Activated B cell treated with CpG ODN at 0.5 μM for 24 hours (primary cell): ENCODE measurements at regions of chr5 and their contacts with region 1.

Region 1: DNA sequence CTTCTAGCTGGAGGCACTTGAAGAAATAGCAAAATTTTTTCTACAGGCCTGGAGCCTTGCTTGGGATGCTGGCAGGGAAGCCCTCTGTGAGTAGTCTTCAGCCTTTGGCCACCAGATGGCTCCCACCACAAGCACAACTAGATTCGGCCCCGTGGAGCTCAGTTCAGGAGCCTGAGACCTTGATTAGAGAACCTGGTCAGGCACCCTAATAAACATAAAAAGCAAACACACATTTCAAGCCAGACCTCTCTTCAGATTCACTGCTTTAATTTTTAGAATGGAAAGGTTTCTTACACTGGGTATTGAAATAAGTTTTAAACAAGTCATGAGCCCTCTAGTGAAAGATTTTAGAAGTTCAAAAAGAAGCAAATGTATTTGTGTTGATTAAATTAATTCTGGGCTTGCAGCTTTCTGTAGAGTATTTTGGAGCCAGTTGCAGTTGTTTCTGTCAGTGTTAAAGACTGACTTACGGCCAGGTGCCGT is 41.4 kb downstream of the GLRX start:
- DNase-seq: peak; percentile 46
- ATAC-seq: peak; percentile 99
- H3K4me3 Mint-ChIP-seq: peak overlapping the region; percentile 21
- H3K27ac Mint-ChIP-seq: peak overlapping the region; percentile 43
- H3K4me1 Mint-ChIP-seq: peaks cover 7% of the 10 kb centered on the region
- H3K27me3 Mint-ChIP-seq: no peaks in the 10 kb centered on the region
- CTCF ChIP-seq: no peak

Region 2: DNA sequence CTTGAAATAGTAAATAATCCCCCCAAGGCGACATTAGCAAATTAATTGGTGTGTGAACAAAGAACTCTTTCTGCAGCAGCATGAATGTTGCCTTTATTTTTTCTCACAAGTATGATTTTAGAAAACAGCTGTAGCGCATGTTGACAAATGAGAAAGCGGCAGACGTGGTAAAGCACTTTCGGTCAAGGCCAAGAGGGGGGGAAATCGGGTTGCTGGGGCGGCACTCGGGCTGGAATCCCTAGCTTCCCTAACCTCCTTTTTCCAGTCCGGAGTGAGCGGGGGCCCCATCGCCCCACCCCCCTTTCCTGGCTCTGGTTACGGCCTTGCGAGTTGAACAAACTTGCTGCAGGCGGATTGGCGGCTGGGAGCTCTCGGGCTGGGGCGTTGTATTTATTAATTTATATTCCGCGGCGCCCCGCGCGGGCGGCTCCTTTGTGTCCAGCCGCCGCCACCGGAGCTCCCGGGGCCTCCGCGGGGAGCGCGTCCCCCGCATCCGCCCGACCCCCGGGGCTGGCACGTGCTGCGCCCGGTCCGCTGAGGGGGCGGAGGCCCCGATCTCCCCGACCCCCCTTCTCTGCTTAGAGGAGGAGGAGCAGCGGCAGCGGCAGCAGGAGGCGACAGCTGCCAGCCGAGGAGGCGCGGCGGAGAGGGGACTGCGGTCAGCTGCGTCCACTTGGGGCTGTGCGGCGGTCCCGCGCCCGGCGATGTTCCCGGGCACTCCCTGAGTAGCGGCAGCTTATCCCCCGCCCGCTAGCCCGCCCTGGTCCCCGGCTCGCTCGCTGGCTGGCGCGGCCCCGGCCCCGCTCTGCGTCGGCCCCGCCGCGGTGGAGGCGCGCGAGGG is 50.2 kb before region 1 on chr5 and contains the start of gene RHOBTB3:
- CTCF ChIA-PET with region 1: interaction called, 12 read pairs
- POLR2A ChIA-PET with region 1: no interaction called
- intact Hi-C with region 1: no loop called
- DNase-seq: peak; percentile 52
- ATAC-seq: peak; percentile 73
- H3K4me3 Mint-ChIP-seq: peak within 1 kb of the TSS; percentile 87
- H3K27ac Mint-ChIP-seq: peak within 1 kb of the TSS; percentile 61
- H3K4me1 Mint-ChIP-seq: peaks cover 34% of the 10 kb centered on the region
- H3K27me3 Mint-ChIP-seq: peaks cover 18% of the 10 kb centered on the region
- CTCF ChIP-seq: no peak
- total RNA-seq, gene RHOBTB3: 3.3 and 5.0 TPM in 2 replicates

Region 3: DNA sequence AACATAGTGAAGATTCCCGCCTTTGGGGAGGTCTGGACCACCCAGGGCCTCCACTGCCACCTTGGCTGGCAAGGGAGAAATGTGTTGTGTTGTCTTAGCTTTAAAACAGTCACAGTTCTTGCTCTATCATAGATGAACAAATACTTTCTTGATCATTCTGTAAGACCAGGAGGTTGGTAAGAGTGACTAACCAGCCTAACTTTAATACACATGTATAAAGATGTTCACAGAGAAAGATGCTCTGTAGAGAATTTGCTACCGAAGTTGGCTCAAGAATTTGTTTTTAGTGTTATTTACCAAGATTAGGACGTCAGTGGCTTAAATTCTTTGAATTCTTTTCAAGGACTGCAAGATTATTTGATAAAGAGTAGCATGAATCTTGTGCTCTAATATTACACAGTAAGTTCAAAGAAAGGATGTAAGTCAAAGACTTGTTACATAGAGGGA is 13.0 kb after region 1 on chr5:
- CTCF ChIA-PET with region 1: interaction called, 15 read pairs
- POLR2A ChIA-PET with region 1: no interaction called
- intact Hi-C with region 1: no loop called
- DNase-seq: no peak
- ATAC-seq: no peak
- H3K4me3 Mint-ChIP-seq: no peak overlapping the region
- H3K27ac Mint-ChIP-seq: no peak overlapping the region
- H3K4me1 Mint-ChIP-seq: peaks cover 5% of the 10 kb centered on the region
- H3K27me3 Mint-ChIP-seq: no peaks in the 10 kb centered on the region
- CTCF ChIP-seq: no peak

Region 4: GRCh38 chr5:95817440-95817839 is 36.3 kb after region 1 on chr5:
- CTCF ChIA-PET with region 1: interaction called, 32 read pairs
- POLR2A ChIA-PET with region 1: interaction called, 16 read pairs
- intact Hi-C with region 1: loop called (anchors 1 kb)
- DNase-seq: no peak
- ATAC-seq: no peak
- H3K4me3 Mint-ChIP-seq: peak overlapping the region; percentile 78
- H3K27ac Mint-ChIP-seq: peak overlapping the region; percentile 98
- H3K4me1 Mint-ChIP-seq: peaks cover 80% of the 10 kb centered on the region
- H3K27me3 Mint-ChIP-seq: no peaks in the 10 kb centered on the region
- CTCF ChIP-seq: no peak

Region 5: DNA sequence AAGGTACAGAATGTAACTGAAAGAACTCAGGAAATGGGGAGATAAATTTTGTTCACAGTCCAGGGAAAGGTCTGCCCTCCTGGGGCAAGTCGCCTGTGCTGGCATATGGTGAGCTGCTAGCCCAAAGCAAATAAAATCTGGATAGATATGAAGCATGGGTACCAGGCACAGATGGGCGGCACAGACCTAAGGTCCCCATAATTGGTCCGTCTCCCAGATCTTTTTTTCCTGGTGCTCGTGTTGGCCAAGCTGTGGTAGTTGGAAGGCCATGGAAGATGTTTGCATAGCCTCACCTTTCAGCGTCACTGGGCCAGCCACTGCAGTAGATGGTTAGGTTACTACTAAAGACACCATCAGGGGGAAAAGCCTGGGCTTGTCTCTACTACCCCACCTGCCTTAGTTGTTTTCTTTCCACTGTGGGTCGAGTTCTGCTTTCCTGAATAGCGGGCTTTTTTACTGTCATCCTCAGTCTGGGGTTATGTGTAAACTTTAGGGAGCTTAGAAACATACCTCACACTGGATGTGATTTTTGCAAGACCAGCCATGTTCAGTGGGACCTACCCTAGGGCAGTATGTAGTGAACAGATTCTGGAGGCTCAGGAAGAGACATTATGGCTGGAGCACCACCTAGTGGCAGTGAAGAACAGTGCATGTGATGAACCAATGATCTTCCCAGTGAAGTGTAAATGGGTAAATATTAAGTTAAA is 65.6 kb after region 1 on chr5:
- CTCF ChIA-PET with region 1: interaction called, 389 read pairs
- POLR2A ChIA-PET with region 1: interaction called, 16 read pairs
- intact Hi-C with region 1: loop called (anchors 1 kb)
- DNase-seq: peak; percentile 45
- ATAC-seq: peak; percentile 80
- H3K4me3 Mint-ChIP-seq: no peak overlapping the region
- H3K27ac Mint-ChIP-seq: no peak overlapping the region
- H3K4me1 Mint-ChIP-seq: peaks cover 11% of the 10 kb centered on the region
- H3K27me3 Mint-ChIP-seq: no peaks in the 10 kb centered on the region
- CTCF ChIP-seq: peak; percentile 82

Region 6: GRCh38 chr5:96336351-96336985 is 555.3 kb after region 1 on chr5:
- CTCF ChIA-PET with region 1: interaction called, 14 read pairs
- POLR2A ChIA-PET with region 1: no interaction called
- intact Hi-C with region 1: loop called (anchors 1 kb)
- DNase-seq: no peak
- ATAC-seq: peak; percentile 91
- H3K4me3 Mint-ChIP-seq: no peak overlapping the region
- H3K27ac Mint-ChIP-seq: no peak overlapping the region
- H3K4me1 Mint-ChIP-seq: no peaks in the 10 kb centered on the region
- H3K27me3 Mint-ChIP-seq: peaks cover 6% of the 10 kb centered on the region
- CTCF ChIP-seq: peak; percentile 23